Activated naive CD4-positive, alpha-beta T cell treated with anti-CD3 and anti-CD28 coated beads for 36 hours (primary cell): ENCODE measurements at regions of chr1 and their contacts with region 1.

Region 1: GRCh38 chr1:24070821-24071393 is 41.0 kb downstream of the MYOM3 start:
- DNase-seq: peak; percentile 87
- H3K4me3 Mint-ChIP-seq: no peak overlapping the region
- H3K27ac Mint-ChIP-seq: no peak overlapping the region
- H3K4me1 Mint-ChIP-seq: no peaks in the 10 kb centered on the region
- H3K27me3 Mint-ChIP-seq: no peaks in the 10 kb centered on the region

Region 2: GRCh38 chr1:22364764-22365163 is 1706.1 kb before region 1 on chr1:
- CTCF ChIA-PET with region 1: no interaction called
- intact Hi-C with region 1: no loop called
- DNase-seq: no peak
- H3K4me3 Mint-ChIP-seq: no peak overlapping the region
- H3K27ac Mint-ChIP-seq: no peak overlapping the region
- H3K4me1 Mint-ChIP-seq: no peaks in the 10 kb centered on the region
- H3K27me3 Mint-ChIP-seq: peaks cover 17% of the 10 kb centered on the region

Region 3: GRCh38 chr1:24060118-24060881 is 10.6 kb before region 1 on chr1:
- CTCF ChIA-PET with region 1: interaction called, 10 read pairs
- intact Hi-C with region 1: no loop called
- DNase-seq: no peak
- H3K4me3 Mint-ChIP-seq: no peak overlapping the region
- H3K27ac Mint-ChIP-seq: no peak overlapping the region
- H3K4me1 Mint-ChIP-seq: no peaks in the 10 kb centered on the region
- H3K27me3 Mint-ChIP-seq: no peaks in the 10 kb centered on the region

Region 4: DNA sequence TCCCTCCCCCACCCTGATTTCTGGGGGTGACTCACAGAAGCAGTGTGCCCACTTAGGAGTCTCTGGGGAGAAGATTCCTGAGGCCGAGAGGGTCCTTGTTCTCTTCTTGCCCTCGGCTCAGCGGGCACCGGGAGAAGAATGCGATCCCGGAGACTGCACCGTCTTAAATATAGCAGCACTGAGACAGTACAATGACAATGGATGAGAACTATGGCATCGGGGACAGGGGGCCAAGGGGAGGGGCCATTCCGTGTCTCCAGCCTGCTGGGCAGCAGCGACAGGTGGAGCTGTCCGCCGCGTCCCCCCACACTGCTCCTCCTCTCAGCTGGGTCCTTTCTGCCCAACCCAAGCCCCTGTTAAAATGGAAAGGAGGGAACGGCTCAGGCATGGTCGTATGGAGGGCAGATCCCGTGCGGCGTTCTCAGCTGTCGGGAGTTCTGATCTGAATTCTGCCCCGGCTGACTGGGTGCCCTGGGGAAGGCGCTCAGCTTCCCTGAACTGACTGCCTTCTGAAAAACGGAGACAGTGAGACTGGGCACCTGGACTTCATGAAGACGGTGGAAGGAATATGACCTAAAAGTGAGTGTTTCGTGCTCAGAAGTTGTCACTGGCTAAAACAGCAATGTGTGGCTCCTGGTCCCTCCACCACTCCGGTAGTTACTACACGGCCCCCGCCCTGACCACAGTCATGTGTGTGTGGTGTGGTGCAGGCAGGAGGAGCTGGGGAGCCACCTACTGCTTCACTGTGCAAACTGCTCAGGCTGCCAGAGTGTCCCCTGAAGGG is 41.3 kb after region 1 on chr1 and contains the start of gene MYOM3:
- CTCF ChIA-PET with region 1: interaction called, 6 read pairs
- intact Hi-C with region 1: loop called (anchors 1 kb)
- DNase-seq: peak; percentile 72
- H3K4me3 Mint-ChIP-seq: no peak within 1 kb of the TSS
- H3K27ac Mint-ChIP-seq: no peak within 1 kb of the TSS
- H3K4me1 Mint-ChIP-seq: peaks cover 5% of the 10 kb centered on the region
- H3K27me3 Mint-ChIP-seq: peaks cover 9% of the 10 kb centered on the region
- total RNA-seq, gene MYOM3: not detected

Region 5: DNA sequence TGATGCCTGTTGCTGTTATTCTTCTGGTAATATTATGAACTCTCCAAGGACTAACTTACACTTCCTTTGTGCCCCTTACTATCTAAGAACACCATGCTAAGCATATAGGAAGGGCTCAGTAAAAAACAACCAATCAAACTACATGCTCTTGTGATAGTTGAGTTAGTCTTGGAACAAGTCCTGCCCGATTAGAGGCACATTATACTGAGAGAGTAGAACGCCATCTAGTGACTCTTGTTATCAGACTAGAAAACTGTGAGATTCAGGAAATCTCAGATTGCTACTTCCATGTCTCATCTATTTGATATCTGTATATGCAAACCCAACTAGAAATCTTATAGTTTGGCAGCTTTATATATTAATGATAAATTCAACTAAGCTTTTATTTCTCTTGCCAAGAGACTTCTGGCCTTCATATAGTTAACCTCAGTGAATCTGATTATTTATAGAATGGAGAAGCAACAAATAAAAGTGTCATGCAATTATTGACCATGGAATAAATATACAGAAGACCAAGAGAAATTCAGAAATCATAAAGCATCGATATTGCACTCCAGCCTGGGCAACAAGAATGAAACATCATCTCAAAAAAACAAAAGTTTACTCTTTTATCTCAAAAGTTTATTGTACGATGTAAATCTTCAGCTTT is 564.4 kb after region 1 on chr1:
- CTCF ChIA-PET with region 1: no interaction called
- intact Hi-C with region 1: loop called (anchors 5 kb)
- DNase-seq: no peak
- H3K4me3 Mint-ChIP-seq: no peak overlapping the region
- H3K27ac Mint-ChIP-seq: no peak overlapping the region
- H3K4me1 Mint-ChIP-seq: peaks cover 11% of the 10 kb centered on the region
- H3K27me3 Mint-ChIP-seq: no peaks in the 10 kb centered on the region